A673 (cell line): ENCODE measurements at regions of chr12 and their contacts with region 1.

Region 1: DNA sequence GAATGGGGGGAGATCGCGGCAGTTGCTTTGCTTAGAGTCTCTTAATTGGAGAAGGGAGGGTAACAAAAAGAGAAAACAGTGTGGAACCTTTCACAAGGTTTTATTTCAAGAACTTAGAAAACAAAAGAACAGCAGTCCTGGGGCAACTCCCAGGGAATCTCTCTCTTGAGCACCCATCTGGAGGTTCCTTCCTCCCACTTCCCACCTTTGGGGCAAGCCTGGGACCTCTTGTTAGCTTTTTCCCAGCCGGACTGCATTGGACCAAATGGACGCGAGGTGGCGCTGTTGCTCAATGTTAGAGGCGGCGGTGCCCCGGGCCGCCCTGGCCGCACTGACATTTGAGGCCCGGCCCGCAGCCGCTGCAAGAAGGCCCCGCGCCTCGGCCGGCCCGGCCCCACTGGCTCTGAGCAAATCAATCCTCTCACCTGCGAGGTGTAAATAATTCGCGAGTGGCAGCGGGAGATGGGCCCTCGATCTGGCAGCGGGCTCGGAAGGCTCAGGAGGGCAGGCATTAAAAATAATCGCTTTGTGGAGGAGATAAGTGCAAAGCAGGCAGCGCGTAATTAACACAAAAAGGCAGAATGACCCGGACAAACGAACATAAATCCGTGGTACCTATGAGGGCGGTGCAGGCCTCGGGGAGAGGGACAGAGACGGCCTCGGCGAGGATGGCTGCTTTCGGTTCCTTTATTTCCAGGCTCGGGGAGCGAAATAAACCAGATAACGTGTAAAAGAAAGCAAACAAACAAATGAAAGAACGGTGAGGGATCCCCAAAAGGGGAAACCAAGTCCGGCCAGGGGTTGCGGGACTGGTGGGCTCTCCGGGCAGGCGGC is 2.7 kb upstream of the HOXC8 start:
- DNase-seq: peak; percentile 86
- H3K4me3 ChIP-seq: no peak overlapping the region
- H3K27ac ChIP-seq: no peak overlapping the region
- H3K4me1 ChIP-seq: peaks cover 71% of the 10 kb centered on the region
- H3K27me3 ChIP-seq: no peaks in the 10 kb centered on the region
- CTCF ChIP-seq: peak; percentile 95

Region 2: GRCh38 chr12:53995378-53996239 is 10.5 kb before region 1 on chr12:
- CTCF ChIA-PET with region 1: interaction called, 19 read pairs
- POLR2A ChIA-PET with region 1: no interaction called
- intact Hi-C with region 1: no loop called
- DNase-seq: peak; percentile 82
- H3K4me3 ChIP-seq: peak overlapping the region; percentile 70
- H3K27ac ChIP-seq: peak overlapping the region; percentile 98
- H3K4me1 ChIP-seq: peaks cover 75% of the 10 kb centered on the region
- H3K27me3 ChIP-seq: no peaks in the 10 kb centered on the region
- CTCF ChIP-seq: no peak

Region 3: DNA sequence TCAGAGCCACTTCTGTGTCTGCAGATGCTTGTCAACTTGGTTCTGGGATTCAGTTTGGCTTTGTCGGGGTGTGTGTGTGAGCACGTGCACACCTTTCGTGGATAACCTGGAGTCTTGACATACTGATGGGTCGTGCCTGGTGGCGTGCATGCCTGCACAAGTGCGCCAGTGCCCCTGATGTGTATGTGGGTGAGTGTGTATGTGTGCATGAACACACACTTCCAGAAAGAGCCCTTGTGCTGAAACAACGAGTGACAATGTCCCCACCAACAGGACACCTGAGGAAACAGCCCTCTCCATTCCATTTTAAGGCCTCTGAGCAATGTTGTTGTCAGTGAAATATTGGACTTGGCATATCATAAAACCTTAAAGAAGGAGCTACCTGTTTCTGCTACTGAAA is 128.8 kb after region 1 on chr12:
- CTCF ChIA-PET with region 1: no interaction called
- POLR2A ChIA-PET with region 1: no interaction called
- intact Hi-C with region 1: loop called (anchors 2 kb)
- DNase-seq: no peak
- H3K4me3 ChIP-seq: no peak overlapping the region
- H3K27ac ChIP-seq: no peak overlapping the region
- H3K4me1 ChIP-seq: peaks cover 4% of the 10 kb centered on the region
- H3K27me3 ChIP-seq: no peaks in the 10 kb centered on the region
- CTCF ChIP-seq: peak; percentile 56

Region 4: DNA sequence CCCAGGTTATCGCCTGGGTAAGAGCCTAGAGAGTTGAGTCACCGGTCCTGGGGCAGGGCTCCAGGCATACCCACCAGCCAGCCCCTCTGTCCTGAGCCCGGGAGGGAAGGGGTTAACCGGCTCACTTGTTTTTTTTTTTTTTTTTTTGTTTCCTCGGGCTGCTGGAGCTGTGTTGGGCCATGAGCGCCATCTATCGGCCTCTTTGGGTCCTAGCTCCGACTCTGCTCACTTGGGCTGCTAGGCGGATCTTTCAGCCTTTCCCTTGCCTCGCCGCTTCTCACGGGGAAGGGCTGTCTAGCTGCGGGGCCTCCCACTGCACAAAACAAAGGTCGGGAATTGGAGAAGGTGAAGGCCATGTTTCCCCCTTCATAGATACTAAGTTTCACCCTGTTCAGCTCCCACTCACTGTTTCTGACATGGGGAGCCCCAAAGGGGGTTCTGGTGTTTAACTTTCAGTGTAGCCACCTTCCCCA is 185.5 kb after region 1 on chr12:
- CTCF ChIA-PET with region 1: interaction called, 19 read pairs
- POLR2A ChIA-PET with region 1: no interaction called
- intact Hi-C with region 1: no loop called
- DNase-seq: peak; percentile 91
- H3K4me3 ChIP-seq: no peak overlapping the region
- H3K27ac ChIP-seq: no peak overlapping the region
- H3K4me1 ChIP-seq: peaks cover 34% of the 10 kb centered on the region
- H3K27me3 ChIP-seq: no peaks in the 10 kb centered on the region
- CTCF ChIP-seq: peak; percentile 91

Region 5: DNA sequence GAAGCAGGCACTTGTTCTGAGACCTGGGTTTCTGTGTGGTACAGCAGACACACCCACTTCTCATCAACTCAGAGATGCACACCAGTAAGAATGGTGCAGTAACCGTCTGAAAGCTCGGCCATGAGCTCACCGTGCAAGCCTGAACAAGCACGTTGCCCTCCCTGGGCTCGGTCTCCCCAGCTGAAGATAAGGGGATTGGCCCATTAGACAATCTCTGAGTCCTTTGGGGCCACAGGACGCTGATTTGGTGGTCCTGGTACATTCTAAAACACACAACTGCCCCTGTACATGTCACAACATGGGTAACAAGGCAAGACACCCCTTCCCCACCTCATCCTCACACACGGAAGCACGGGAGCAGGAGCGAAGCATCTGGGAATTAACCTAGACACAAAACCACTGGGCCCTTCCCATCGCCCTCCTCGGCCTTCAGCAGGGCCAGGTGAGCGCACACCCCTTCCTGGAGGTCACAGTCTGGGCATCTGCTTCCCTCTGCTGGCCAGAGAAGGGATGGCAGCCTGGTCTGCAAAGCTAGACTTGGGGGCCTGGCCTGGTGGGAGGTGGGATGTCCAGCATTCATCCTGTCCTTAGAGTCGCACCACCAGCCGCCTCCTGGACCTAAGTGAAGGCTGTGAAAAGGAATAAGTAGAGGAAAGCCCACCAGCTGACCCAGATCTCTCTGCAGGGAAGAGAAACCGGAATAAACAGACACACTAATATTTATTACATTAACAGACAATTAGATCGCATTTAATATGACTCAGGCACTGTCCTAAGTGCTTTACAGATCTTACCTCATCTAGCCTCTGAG is 201.6 kb after region 1 on chr12:
- CTCF ChIA-PET with region 1: interaction called, 19 read pairs
- POLR2A ChIA-PET with region 1: no interaction called
- intact Hi-C with region 1: no loop called
- DNase-seq: peak; percentile 73
- H3K4me3 ChIP-seq: no peak overlapping the region
- H3K27ac ChIP-seq: no peak overlapping the region
- H3K4me1 ChIP-seq: no peaks in the 10 kb centered on the region
- H3K27me3 ChIP-seq: no peaks in the 10 kb centered on the region
- CTCF ChIP-seq: peak; percentile 97